ENCODE measurements at regions of chr5 and their contacts with region 1.

Region 1: GRCh38 chr5:128083033-128083810 is at the start of gene SLC12A2:
- DNase-seq: peak; percentile 94
- ATAC-seq: peak; percentile 68
- H3K4me3 Mint-ChIP-seq: peak within 1 kb of the TSS; percentile 91
- H3K27ac Mint-ChIP-seq: peak within 1 kb of the TSS; percentile 94
- H3K4me1 Mint-ChIP-seq: peaks cover 50% of the 10 kb centered on the region
- H3K27me3 Mint-ChIP-seq: no peaks in the 10 kb centered on the region
- total RNA-seq, gene SLC12A2: 8.0 to 13.1 TPM

Region 2: GRCh38 chr5:126763371-126763770 is 1319.9 kb before region 1 on chr5:
- CTCF ChIA-PET with region 1: no interaction called
- POLR2A ChIA-PET with region 1: no interaction called
- intact Hi-C with region 1: loop called (anchors 5 kb)
- DNase-seq: no peak
- ATAC-seq: no peak
- H3K4me3 Mint-ChIP-seq: no peak overlapping the region
- H3K27ac Mint-ChIP-seq: peak overlapping the region; percentile 76
- H3K4me1 Mint-ChIP-seq: peaks cover 43% of the 10 kb centered on the region
- H3K27me3 Mint-ChIP-seq: no peaks in the 10 kb centered on the region

Region 3: DNA sequence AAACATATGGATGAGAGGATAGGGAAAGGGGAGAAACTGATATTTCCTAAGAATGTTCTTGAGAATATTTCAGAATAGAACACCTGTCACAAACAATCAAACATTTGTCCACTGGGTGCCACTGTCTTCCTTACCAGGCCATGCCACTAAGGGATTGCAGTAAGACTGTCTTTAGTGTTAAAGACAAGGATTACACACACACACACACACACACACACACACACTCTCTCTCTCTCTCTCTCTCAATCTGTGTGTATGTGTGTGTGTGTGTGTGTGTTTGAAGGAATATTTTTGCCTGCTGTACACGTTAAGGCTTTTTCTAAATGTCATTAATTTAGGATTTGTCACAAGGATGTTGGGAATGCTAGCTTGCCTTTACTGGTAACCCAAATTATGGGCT is 325.6 kb before region 1 on chr5:
- CTCF ChIA-PET with region 1: no interaction called
- POLR2A ChIA-PET with region 1: no interaction called
- intact Hi-C with region 1: loop called in 1 of 2 experiments (anchors 10 kb)
- DNase-seq: peak; percentile 45
- ATAC-seq: peak; percentile 80
- H3K4me3 Mint-ChIP-seq: no peak overlapping the region
- H3K27ac Mint-ChIP-seq: no peak overlapping the region
- H3K4me1 Mint-ChIP-seq: no peaks in the 10 kb centered on the region
- H3K27me3 Mint-ChIP-seq: no peaks in the 10 kb centered on the region

Region 4: GRCh38 chr5:127875235-127876021 is 207.8 kb before region 1 on chr5:
- CTCF ChIA-PET with region 1: interaction called, 3 read pairs
- POLR2A ChIA-PET with region 1: no interaction called
- intact Hi-C with region 1: loop called in 1 of 2 experiments (anchors 5 kb)
- DNase-seq: peak; percentile 60
- ATAC-seq: peak; percentile 91
- H3K4me3 Mint-ChIP-seq: no peak overlapping the region
- H3K27ac Mint-ChIP-seq: no peak overlapping the region
- H3K4me1 Mint-ChIP-seq: no peaks in the 10 kb centered on the region
- H3K27me3 Mint-ChIP-seq: no peaks in the 10 kb centered on the region

Region 5: GRCh38 chr5:129094087-129094923 is 1011.1 kb after region 1 on chr5 and contains the start of gene ISOC1:
- CTCF ChIA-PET with region 1: no interaction called
- POLR2A ChIA-PET with region 1: interaction called, 5 read pairs
- intact Hi-C with region 1: loop called (anchors 1 to 10 kb)
- DNase-seq: peak; percentile 95
- ATAC-seq: peak; percentile 94
- H3K4me3 Mint-ChIP-seq: peak within 1 kb of the TSS; percentile 79
- H3K27ac Mint-ChIP-seq: peak within 1 kb of the TSS; percentile 37
- H3K4me1 Mint-ChIP-seq: peaks cover 25% of the 10 kb centered on the region
- H3K27me3 Mint-ChIP-seq: peaks cover 8% of the 10 kb centered on the region
- total RNA-seq, gene ISOC1: 21.5 to 25.3 TPM